K562 (cell line): ENCODE measurements at regions of chr2 and their contacts with region 1.

Region 1: GRCh38 chr2:102020596-102021181 is 28.9 kb downstream of the IL1R2 start:
- DNase-seq: peak; percentile 79 to 88 (median 84)
- ATAC-seq: peak; percentile 99
- H3K4me3 ChIP-seq: no peak overlapping the region
- H3K27ac ChIP-seq: no peak overlapping the region
- H3K4me1 ChIP-seq: peaks cover 0 to 7% of the 10 kb centered on the region in 2 experiments; a peak in 1 of 5 replicates
- H3K27me3 ChIP-seq: no peaks in the 10 kb centered on the region
- CTCF ChIP-seq: peak; percentile 91 to 97 (median 95)
- EP300 ChIP-seq: no peak
- POLR2A ChIP-seq: no peak
- RAD21 ChIP-seq: peak; percentile 97 to 99

Region 2: GRCh38 chr2:101854877-101855276 is 165.8 kb before region 1 on chr2:
- CTCF ChIA-PET with region 1: no interaction called
- POLR2A ChIA-PET with region 1: no interaction called
- in situ Hi-C with region 1: no loop called
- intact Hi-C with region 1: no loop called
- DNase-seq: no peak
- ATAC-seq: no peak
- H3K4me3 ChIP-seq: no peak overlapping the region
- H3K27ac ChIP-seq: no peak overlapping the region
- H3K4me1 ChIP-seq: peaks cover 0 to 2% of the 10 kb centered on the region in 2 experiments; a peak in 1 of 5 replicates
- H3K27me3 ChIP-seq: no peaks in the 10 kb centered on the region
- CTCF ChIP-seq: no peak
- EP300 ChIP-seq: no peak
- POLR2A ChIP-seq: no peak
- RAD21 ChIP-seq: no peak

Region 3: DNA sequence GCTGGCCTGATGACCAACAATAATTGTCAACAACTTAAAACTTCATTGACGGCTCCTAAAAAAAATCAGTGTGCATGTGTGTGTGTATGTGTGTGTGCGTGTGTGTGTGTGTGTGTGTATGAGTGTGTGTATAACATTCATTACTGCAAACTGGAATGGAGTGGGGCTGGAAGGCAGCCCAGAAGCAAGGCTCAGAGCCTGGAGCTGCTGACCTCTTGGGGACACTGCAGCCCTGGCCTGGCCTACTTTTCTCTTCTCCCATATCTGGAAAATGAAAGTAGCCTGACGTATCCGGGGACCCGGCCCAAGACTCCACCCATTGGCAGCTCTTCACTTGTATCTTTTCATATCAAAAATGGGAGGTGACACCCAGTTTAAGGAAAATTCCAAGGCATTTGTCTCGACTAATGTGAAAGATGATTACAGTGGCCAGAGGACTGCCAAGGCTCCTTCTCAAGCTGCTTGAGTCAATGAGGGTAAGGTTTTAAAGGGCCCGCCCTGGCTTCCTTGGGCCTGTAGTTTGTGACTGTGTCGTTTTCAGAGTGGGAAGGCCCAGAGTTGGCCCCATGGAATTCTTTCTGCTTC is 49.5 kb after region 1 on chr2:
- CTCF ChIA-PET with region 1: no interaction called
- POLR2A ChIA-PET with region 1: no interaction called
- in situ Hi-C with region 1: no loop called
- intact Hi-C with region 1: loop called (anchors 1 kb)
- DNase-seq: peak in 3 of 4 experiments; percentile 33 to 81 (median 61)
- ATAC-seq: peak; percentile 81
- H3K4me3 ChIP-seq: no peak overlapping the region
- H3K27ac ChIP-seq: peak overlapping the region; percentile 43
- H3K4me1 ChIP-seq: peaks cover 33 to 49% of the 10 kb centered on the region in 2 experiments
- H3K27me3 ChIP-seq: no peaks in the 10 kb centered on the region
- CTCF ChIP-seq: peak in 2 of 3 experiments; percentile 18 to 61; a peak in 2 of 6 replicates
- EP300 ChIP-seq: no peak
- POLR2A ChIP-seq: no peak
- RAD21 ChIP-seq: peak; percentile 53 to 68

Region 4: GRCh38 chr2:102166189-102166845 is 145.6 kb after region 1 on chr2:
- CTCF ChIA-PET with region 1: interaction called, 20 read pairs
- POLR2A ChIA-PET with region 1: interaction called, 5 read pairs
- in situ Hi-C with region 1: no loop called
- intact Hi-C with region 1: loop called (anchors 1 kb)
- DNase-seq: peak in 2 of 4 experiments; percentile 25 to 48
- ATAC-seq: peak; percentile 91
- H3K4me3 ChIP-seq: no peak overlapping the region
- H3K27ac ChIP-seq: no peak overlapping the region
- H3K4me1 ChIP-seq: no peaks in the 10 kb centered on the region
- H3K27me3 ChIP-seq: no peaks in the 10 kb centered on the region
- CTCF ChIP-seq: peak; percentile 46 to 77 (median 55); a peak in 5 of 6 replicates
- EP300 ChIP-seq: no peak
- POLR2A ChIP-seq: no peak
- RAD21 ChIP-seq: peak; percentile 88 to 89

Region 5: GRCh38 chr2:102240640-102241370 is 220.1 kb after region 1 on chr2:
- CTCF ChIA-PET with region 1: interaction called, 25 read pairs
- POLR2A ChIA-PET with region 1: no interaction called
- in situ Hi-C with region 1: loop called (anchors 5 kb)
- intact Hi-C with region 1: loop called (anchors 1 kb)
- DNase-seq: peak; percentile 78 to 91 (median 80)
- ATAC-seq: peak; percentile 99
- H3K4me3 ChIP-seq: no peak overlapping the region
- H3K27ac ChIP-seq: no peak overlapping the region
- H3K4me1 ChIP-seq: peaks cover 0 to 7% of the 10 kb centered on the region in 2 experiments; a peak in 3 of 5 replicates
- H3K27me3 ChIP-seq: peaks cover 0 to 9% of the 10 kb centered on the region in 2 experiments; a peak in 1 of 5 replicates
- CTCF ChIP-seq: peak; percentile 94 to 98 (median 95)
- EP300 ChIP-seq: no peak; the same call in 1 of the 2 replicates
- POLR2A ChIP-seq: no peak
- RAD21 ChIP-seq: peak; percentile 95 to 98

Region 6: GRCh38 chr2:102449370-102449974 is 428.8 kb after region 1 on chr2:
- CTCF ChIA-PET with region 1: no interaction called
- POLR2A ChIA-PET with region 1: no interaction called
- in situ Hi-C with region 1: loop called (anchors 5 kb)
- intact Hi-C with region 1: loop called (anchors 2 kb)
- DNase-seq: peak; percentile 35 to 70 (median 40)
- ATAC-seq: peak; percentile 72; the same call in 2 of the 3 replicates
- H3K4me3 ChIP-seq: no peak overlapping the region
- H3K27ac ChIP-seq: no peak overlapping the region
- H3K4me1 ChIP-seq: no peaks in the 10 kb centered on the region
- H3K27me3 ChIP-seq: no peaks in the 10 kb centered on the region
- CTCF ChIP-seq: peak; percentile 66 to 84 (median 73); a peak in 5 of 6 replicates
- EP300 ChIP-seq: no peak
- POLR2A ChIP-seq: no peak
- RAD21 ChIP-seq: peak; percentile 86